AG04449 (cell line): ENCODE measurements at regions of chr21 and their contacts with region 1.

Region 1: GRCh38 chr21:40120940-40121575 is 253.8 kb downstream of the PCP4 start:
- DNase-seq: no peak
- H3K4me3 ChIP-seq: no peak overlapping the region
- CTCF ChIP-seq: peak; percentile 66

Region 2: DNA sequence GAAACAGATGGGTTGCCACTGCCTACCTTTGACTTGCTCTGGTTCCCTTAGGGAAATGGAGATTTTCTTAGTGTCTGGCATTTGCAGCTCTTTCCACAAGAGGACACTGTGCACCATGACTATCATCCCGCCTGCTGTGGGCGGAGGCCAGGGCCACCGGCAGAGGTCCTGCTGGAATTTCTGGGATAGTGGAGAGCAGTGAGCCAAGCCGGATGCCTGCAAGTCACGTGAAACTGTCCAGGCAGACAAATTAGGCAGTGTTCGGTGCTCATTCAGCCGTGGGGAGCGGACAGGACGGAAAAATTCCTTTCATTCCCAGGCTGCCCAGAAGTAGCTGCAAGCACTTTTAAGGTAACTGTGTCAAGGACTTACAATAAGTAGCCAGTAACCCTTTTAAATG is 332.7 kb before region 1 on chr21:
- CTCF ChIA-PET with region 1: interaction called, 40 read pairs
- POLR2A ChIA-PET with region 1: no interaction called
- DNase-seq: peak; percentile 5
- H3K4me3 ChIP-seq: no peak overlapping the region
- CTCF ChIP-seq: peak; percentile 71

Region 3: DNA sequence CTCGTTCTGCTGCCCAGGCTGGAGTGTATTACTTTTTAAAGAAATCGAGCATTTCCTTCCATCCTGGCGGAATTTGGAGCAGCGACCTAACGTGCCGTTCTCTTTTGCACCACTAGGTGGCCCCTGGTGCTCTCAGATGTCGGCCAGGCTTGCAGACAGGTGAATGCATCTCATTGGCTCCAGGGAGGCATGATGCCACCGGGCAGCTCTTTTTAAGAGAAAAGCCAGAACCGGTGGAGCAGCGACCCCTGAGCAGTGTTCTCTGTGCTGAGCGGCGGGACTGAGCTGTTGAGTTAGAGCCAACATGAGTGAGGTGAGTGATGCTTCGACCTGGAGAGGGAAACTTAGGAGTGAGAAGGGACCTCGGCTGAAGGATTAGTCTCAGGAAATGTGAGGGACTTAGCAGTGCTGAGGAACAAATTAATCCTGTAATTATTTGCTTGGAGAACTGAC is 253.8 kb before region 1 on chr21 and contains the start of gene PCP4:
- CTCF ChIA-PET with region 1: interaction called, 92 read pairs
- POLR2A ChIA-PET with region 1: no interaction called
- DNase-seq: no peak
- H3K4me3 ChIP-seq: no peak within 1 kb of the TSS
- CTCF ChIP-seq: peak; percentile 83

Region 4: GRCh38 chr21:40099809-40100208 is 21.2 kb before region 1 on chr21:
- CTCF ChIA-PET with region 1: no interaction called
- POLR2A ChIA-PET with region 1: no interaction called
- DNase-seq: no peak
- H3K4me3 ChIP-seq: no peak overlapping the region
- CTCF ChIP-seq: no peak

Region 5: GRCh38 chr21:40215941-40216340 is 94.9 kb after region 1 on chr21:
- CTCF ChIA-PET with region 1: no interaction called
- POLR2A ChIA-PET with region 1: no interaction called
- DNase-seq: no peak
- H3K4me3 ChIP-seq: no peak overlapping the region
- CTCF ChIP-seq: no peak

Region 6: GRCh38 chr21:40235513-40235912 is 114.5 kb after region 1 on chr21:
- CTCF ChIA-PET with region 1: no interaction called
- POLR2A ChIA-PET with region 1: no interaction called
- DNase-seq: no peak
- H3K4me3 ChIP-seq: no peak overlapping the region
- CTCF ChIP-seq: no peak